ENCODE measurements at regions of chr5 and their contacts with region 1.

Region 1: GRCh38 chr5:161342886-161343285 is 203.6 kb downstream of the GABRB2 start:
- DNase-seq: no peak
- ATAC-seq: no peak
- H3K4me3 ChIP-seq: no peak overlapping the region
- H3K4me3 Mint-ChIP-seq: no peak overlapping the region
- H3K27ac ChIP-seq: no peak overlapping the region
- H3K27ac Mint-ChIP-seq: no peak overlapping the region
- H3K4me1 ChIP-seq: no peaks in the 10 kb centered on the region
- H3K4me1 Mint-ChIP-seq: no peaks in the 10 kb centered on the region
- H3K27me3 ChIP-seq: no peaks in the 10 kb centered on the region
- H3K27me3 Mint-ChIP-seq: no peaks in the 10 kb centered on the region
- CTCF ChIP-seq: no peak

Region 2: GRCh38 chr5:161034451-161034850 is 308.4 kb before region 1 on chr5:
- CTCF ChIA-PET with region 1: no interaction called
- POLR2A ChIA-PET with region 1: no interaction called
- intact Hi-C with region 1: loop called in 1 of 2 experiments (anchors 5 kb)
- DNase-seq: no peak
- ATAC-seq: no peak
- H3K4me3 ChIP-seq: no peak overlapping the region
- H3K4me3 Mint-ChIP-seq: no peak overlapping the region
- H3K27ac ChIP-seq: no peak overlapping the region
- H3K27ac Mint-ChIP-seq: no peak overlapping the region
- H3K4me1 ChIP-seq: no peaks in the 10 kb centered on the region
- H3K4me1 Mint-ChIP-seq: no peaks in the 10 kb centered on the region
- H3K27me3 ChIP-seq: no peaks in the 10 kb centered on the region
- H3K27me3 Mint-ChIP-seq: peaks cover 13% of the 10 kb centered on the region
- CTCF ChIP-seq: no peak